ENCODE measurements at regions of chr1 and their contacts with region 1.

Region 1: GRCh38 chr1:43529206-43529731 is 1.4 kb upstream of the PTPRF start:
- DNase-seq: peak; percentile 82
- ATAC-seq: peak; percentile 64
- H3K4me3 ChIP-seq: no peak overlapping the region
- H3K27ac ChIP-seq: no peak overlapping the region
- H3K4me1 ChIP-seq: peaks cover 45% of the 10 kb centered on the region
- H3K27me3 ChIP-seq: no peaks in the 10 kb centered on the region
- CTCF ChIP-seq: peak; percentile 95
- EP300 ChIP-seq: no peak
- POLR2A ChIP-seq: no peak
- RAD21 ChIP-seq: peak; percentile 95

Region 2: GRCh38 chr1:43414634-43415223 is 114.5 kb before region 1 on chr1:
- CTCF ChIA-PET with region 1: no interaction called
- POLR2A ChIA-PET with region 1: no interaction called
- in situ Hi-C with region 1: no loop called
- intact Hi-C with region 1: no loop called
- DNase-seq: peak; percentile 62
- ATAC-seq: peak; percentile 95
- H3K4me3 ChIP-seq: no peak overlapping the region
- H3K27ac ChIP-seq: no peak overlapping the region
- H3K4me1 ChIP-seq: peaks cover 16% of the 10 kb centered on the region
- H3K27me3 ChIP-seq: no peaks in the 10 kb centered on the region
- CTCF ChIP-seq: peak; percentile 75
- EP300 ChIP-seq: no peak
- POLR2A ChIP-seq: no peak
- RAD21 ChIP-seq: peak; percentile 86

Region 3: GRCh38 chr1:43545695-43546387 is 16.6 kb after region 1 on chr1:
- CTCF ChIA-PET with region 1: no interaction called
- POLR2A ChIA-PET with region 1: interaction called, 87 read pairs
- in situ Hi-C with region 1: no loop called
- intact Hi-C with region 1: loop called (anchors 1 kb)
- DNase-seq: peak; percentile 98
- ATAC-seq: peak; percentile 73
- H3K4me3 ChIP-seq: peak overlapping the region in 1 of 3 experiments; percentile 55; a peak in 2 of 6 replicates
- H3K27ac ChIP-seq: peak overlapping the region; percentile 96
- H3K4me1 ChIP-seq: peaks cover 90% of the 10 kb centered on the region
- H3K27me3 ChIP-seq: no peaks in the 10 kb centered on the region
- CTCF ChIP-seq: peak; percentile 35
- EP300 ChIP-seq: peak; percentile 87 to 96
- POLR2A ChIP-seq: no peak
- RAD21 ChIP-seq: no peak

Region 4: GRCh38 chr1:43587594-43587993 is 58.3 kb after region 1 on chr1:
- CTCF ChIA-PET with region 1: interaction called, 7 read pairs
- POLR2A ChIA-PET with region 1: no interaction called
- in situ Hi-C with region 1: loop called (anchors 5 kb)
- intact Hi-C with region 1: loop called (anchors 2 kb)
- DNase-seq: no peak
- ATAC-seq: no peak
- H3K4me3 ChIP-seq: no peak overlapping the region
- H3K27ac ChIP-seq: no peak overlapping the region
- H3K4me1 ChIP-seq: no peaks in the 10 kb centered on the region
- H3K27me3 ChIP-seq: no peaks in the 10 kb centered on the region
- CTCF ChIP-seq: no peak
- EP300 ChIP-seq: no peak
- POLR2A ChIP-seq: no peak
- RAD21 ChIP-seq: no peak

Region 5: GRCh38 chr1:43706598-43707495 is 177.6 kb after region 1 on chr1:
- CTCF ChIA-PET with region 1: no interaction called
- POLR2A ChIA-PET with region 1: no interaction called
- in situ Hi-C with region 1: no loop called
- intact Hi-C with region 1: loop called (anchors 1 kb)
- DNase-seq: peak; percentile 82
- ATAC-seq: peak; percentile 96
- H3K4me3 ChIP-seq: peak overlapping the region; percentile 64 to 96 (median 85)
- H3K27ac ChIP-seq: peak overlapping the region; percentile 76
- H3K4me1 ChIP-seq: peaks cover 30% of the 10 kb centered on the region
- H3K27me3 ChIP-seq: no peaks in the 10 kb centered on the region; a peak in 1 of 5 replicates
- CTCF ChIP-seq: no peak
- EP300 ChIP-seq: no peak
- POLR2A ChIP-seq: peak; percentile 95 to 99
- RAD21 ChIP-seq: no peak

Region 6: DNA sequence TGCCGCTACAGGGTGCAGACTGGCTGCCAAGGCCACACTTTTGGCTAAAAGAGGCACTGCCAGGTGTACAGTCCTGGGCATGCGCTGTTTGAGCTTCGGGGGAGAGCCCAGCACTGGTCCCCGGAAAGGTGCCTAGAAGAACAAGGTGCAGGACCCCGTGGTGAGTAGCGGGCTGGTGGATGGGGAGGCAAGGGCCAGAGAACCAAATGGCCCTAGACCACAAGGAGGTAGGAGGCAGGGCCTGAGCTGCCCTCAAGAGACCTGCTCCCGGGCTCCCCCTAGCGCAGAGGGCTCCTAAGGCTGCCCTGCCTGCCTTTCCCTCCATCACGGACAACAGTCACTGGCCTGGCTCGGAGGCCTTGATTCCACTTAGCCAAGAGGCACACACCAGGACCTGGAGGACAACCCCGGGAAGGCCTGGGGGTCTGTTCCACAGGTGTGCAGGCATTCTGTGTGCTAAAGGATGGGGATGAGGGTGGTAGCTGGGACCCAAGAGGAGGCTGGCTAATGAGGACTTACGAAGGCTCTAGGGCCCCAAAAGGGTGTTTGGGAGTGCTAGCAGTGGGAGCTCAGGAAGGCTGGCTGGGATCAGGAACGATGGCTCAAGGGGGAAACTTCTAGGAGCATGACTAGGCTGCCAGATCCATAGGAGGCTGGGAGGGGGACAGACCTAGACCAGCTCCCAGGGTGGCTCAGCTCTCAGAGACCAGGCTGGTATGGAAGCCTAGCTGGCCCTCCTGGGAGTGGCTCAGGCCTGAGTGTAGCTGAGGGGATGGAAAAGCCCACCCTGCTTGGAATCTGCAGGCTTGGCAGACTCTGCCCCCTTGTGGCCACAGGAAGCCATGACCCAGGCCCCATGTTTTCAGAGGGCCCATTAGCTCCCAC is 405.1 kb after region 1 on chr1:
- CTCF ChIA-PET with region 1: no interaction called
- POLR2A ChIA-PET with region 1: no interaction called
- in situ Hi-C with region 1: loop called (anchors 5 kb)
- intact Hi-C with region 1: loop called (anchors 1 kb)
- DNase-seq: peak; percentile 65
- ATAC-seq: peak; percentile 68
- H3K4me3 ChIP-seq: peak overlapping the region in 2 of 3 experiments; percentile 39 to 84; a peak in 2 of 6 replicates
- H3K27ac ChIP-seq: no peak overlapping the region
- H3K4me1 ChIP-seq: peaks cover 39% of the 10 kb centered on the region
- H3K27me3 ChIP-seq: no peaks in the 10 kb centered on the region
- CTCF ChIP-seq: peak; percentile 91
- EP300 ChIP-seq: no peak
- POLR2A ChIP-seq: no peak
- RAD21 ChIP-seq: peak; percentile 75